Mammary epithelial cell (primary cell): ENCODE measurements at regions of chr2 and their contacts with region 1.

Region 1: GRCh38 chr2:128260239-128261138 is 58.2 kb downstream of the HS6ST1 start:
- DNase-seq: peak; percentile 76
- H3K4me3 ChIP-seq: peak overlapping the region in 1 of 3 experiments; percentile 18
- H3K27ac ChIP-seq: peak overlapping the region; percentile 34
- H3K4me1 ChIP-seq: peaks cover 20% of the 10 kb centered on the region
- H3K27me3 ChIP-seq: no peaks in the 10 kb centered on the region
- CTCF ChIP-seq: peak; percentile 14 to 50

Region 2: GRCh38 chr2:128202791-128203190 is 57.7 kb before region 1 on chr2:
- CTCF ChIA-PET with region 1: no interaction called
- dilution Hi-C with region 1: loop called (anchors 10 kb)
- in situ Hi-C with region 1: no loop called
- intact Hi-C with region 1: no loop called
- DNase-seq: no peak
- H3K4me3 ChIP-seq: no peak overlapping the region
- H3K27ac ChIP-seq: no peak overlapping the region
- H3K4me1 ChIP-seq: no peaks in the 10 kb centered on the region
- H3K27me3 ChIP-seq: no peaks in the 10 kb centered on the region
- CTCF ChIP-seq: no peak

Region 3: DNA sequence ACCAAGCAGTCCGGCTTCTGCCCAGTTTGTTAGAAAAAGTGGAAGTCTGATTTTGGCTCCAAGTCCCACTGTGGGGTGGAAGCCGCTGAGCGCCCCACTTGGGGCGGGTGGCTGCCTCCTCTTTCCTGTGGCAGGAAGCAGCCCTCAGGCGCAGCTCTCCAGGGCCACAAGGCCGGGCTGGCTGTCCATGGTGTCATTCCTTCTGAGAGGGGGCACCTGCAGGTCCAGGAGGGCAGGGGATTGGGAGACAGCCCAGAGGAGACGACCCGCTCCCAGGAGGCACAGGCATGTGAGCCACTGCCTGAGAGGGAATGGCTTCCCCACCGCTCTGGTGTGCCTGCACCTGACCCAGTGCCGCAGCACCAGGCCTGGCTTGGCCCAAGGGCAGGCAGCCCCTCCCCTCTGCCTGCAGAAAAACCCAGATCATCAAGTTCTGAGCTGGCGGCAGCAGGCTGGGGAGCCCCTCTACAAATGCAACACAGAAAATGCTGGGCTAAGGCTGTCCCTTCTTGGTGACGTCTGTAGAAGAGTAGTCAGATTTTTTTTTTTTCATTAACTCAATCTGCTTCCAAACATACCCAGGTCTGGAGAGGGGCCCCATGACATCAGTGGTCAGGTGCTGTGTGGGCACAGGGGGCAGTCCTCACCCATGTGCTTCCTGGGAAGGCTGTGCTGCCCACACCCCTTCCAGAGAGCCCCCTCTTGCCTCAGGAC is 19.8 kb after region 1 on chr2:
- CTCF ChIA-PET with region 1: no interaction called
- dilution Hi-C with region 1: no loop called
- in situ Hi-C with region 1: no loop called
- intact Hi-C with region 1: no loop called
- DNase-seq: no peak
- H3K4me3 ChIP-seq: no peak overlapping the region
- H3K27ac ChIP-seq: no peak overlapping the region
- H3K4me1 ChIP-seq: peaks cover 19% of the 10 kb centered on the region
- H3K27me3 ChIP-seq: no peaks in the 10 kb centered on the region
- CTCF ChIP-seq: no peak